Activated naive CD8-positive, alpha-beta T cell treated with anti-CD3 and anti-CD28 coated beads, Interleukin-2, amount 10 ng/mL, durations not matched to agents 7 days and 5 days (primary cell): ENCODE measurements at regions of chr17 and their contacts with region 1.

Region 1: DNA sequence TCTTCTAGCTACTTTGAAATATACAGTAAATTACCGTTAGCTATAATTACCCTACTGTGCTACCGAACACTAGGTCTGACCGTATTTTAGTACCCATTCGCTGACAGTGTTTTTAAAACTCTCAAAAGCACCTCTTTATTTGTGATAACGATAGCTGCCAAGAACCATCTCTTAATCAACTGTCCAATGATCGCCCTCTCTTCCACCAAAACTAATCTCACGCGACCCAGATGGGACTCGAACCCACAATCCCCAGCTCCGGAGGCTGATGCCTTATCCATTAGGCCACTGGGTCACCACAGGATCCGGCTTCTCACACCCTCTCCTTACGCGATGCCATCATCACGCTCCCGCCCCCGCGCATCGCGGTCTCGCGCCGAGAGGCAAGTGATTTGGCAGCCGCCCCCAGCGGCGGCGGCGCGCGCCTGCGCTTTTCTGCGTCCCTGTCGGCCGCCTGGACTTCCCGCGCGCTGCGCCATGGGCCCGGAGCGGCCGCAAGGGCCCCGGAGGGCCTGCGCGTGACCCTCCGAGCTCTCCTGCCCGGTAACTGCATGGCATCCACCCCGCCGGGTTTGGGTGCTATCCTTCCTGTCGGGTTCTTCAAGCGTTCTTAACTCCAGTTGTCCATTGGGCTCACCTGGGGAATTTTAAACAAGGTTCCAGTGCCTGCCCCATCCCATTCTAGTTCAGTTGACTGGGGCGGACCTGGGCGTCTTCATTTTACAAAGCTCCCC is 15.7 kb upstream of the KPNA2 start:
- DNase-seq: peak; percentile 98
- ATAC-seq: peak; percentile 91
- H3K4me3 Mint-ChIP-seq: peak overlapping the region; percentile 87
- H3K27ac Mint-ChIP-seq: peak overlapping the region; percentile 86
- H3K4me1 Mint-ChIP-seq: peaks cover 9% of the 10 kb centered on the region
- H3K27me3 Mint-ChIP-seq: peaks cover 8% of the 10 kb centered on the region

Region 2: DNA sequence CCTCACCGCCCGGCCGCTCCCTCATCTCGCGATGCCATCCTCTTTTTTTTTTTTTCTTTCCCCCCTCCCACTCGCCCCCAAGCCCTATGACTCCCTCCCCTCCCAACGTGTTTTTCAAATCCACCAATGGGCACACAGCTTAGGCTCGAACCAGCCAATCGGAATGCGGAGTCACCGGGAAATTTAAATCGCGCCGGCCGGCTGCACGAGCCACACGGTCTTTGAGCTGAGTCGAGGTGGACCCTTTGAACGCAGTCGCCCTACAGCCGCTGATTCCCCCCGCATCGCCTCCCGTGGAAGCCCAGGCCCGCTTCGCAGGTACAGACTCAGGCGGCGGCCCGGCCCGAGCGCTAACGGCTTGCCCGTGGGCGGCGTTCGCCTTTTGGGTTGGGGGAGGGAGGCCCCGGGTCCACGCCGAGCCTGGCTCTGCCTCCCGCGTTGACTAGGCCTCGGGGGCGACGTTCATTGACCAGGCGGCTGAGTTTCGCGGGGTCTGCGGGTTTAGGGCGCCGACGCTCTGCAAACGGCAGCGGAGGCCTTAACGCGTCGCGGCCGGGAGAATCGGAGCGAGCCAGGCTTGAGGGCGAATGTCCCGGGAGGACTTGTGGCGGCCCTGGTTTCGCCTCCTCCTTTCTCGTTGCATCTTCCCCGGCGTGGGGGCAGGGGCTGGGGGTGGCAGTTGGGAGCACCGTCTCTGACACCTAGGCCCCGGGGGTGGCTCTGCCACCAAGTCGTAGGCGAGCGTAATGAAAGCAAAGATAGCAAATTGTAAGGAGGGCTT is 15.9 kb after region 1 on chr17 and contains the start of gene KPNA2:
- POLR2A ChIA-PET with region 1: interaction called, 17 read pairs
- DNase-seq: peak; percentile 88
- ATAC-seq: peak; percentile 94
- H3K4me3 Mint-ChIP-seq: peak within 1 kb of the TSS; percentile 98
- H3K27ac Mint-ChIP-seq: peak within 1 kb of the TSS; percentile 95
- H3K4me1 Mint-ChIP-seq: peaks cover 11% of the 10 kb centered on the region
- H3K27me3 Mint-ChIP-seq: no peaks in the 10 kb centered on the region
- total RNA-seq, gene KPNA2: 138 to 148 TPM